Activated CD4-positive, alpha-beta memory T cell treated with anti-CD3 and anti-CD28 coated beads, Interleukin-2, amount 10 ng/mL, durations not matched to agents 7 days and 5 days (primary cell): ENCODE measurements at regions of chr9 and their contacts with region 1.

Region 1: GRCh38 chr9:20209391-20210340 is 412.6 kb downstream of the MLLT3 start:
- DNase-seq: peak; percentile 73
- H3K4me3 Mint-ChIP-seq: peak overlapping the region; percentile 4
- H3K27ac Mint-ChIP-seq: peak overlapping the region; percentile 92
- H3K4me1 Mint-ChIP-seq: peaks cover 45% of the 10 kb centered on the region
- H3K27me3 Mint-ChIP-seq: no peaks in the 10 kb centered on the region

Region 2: DNA sequence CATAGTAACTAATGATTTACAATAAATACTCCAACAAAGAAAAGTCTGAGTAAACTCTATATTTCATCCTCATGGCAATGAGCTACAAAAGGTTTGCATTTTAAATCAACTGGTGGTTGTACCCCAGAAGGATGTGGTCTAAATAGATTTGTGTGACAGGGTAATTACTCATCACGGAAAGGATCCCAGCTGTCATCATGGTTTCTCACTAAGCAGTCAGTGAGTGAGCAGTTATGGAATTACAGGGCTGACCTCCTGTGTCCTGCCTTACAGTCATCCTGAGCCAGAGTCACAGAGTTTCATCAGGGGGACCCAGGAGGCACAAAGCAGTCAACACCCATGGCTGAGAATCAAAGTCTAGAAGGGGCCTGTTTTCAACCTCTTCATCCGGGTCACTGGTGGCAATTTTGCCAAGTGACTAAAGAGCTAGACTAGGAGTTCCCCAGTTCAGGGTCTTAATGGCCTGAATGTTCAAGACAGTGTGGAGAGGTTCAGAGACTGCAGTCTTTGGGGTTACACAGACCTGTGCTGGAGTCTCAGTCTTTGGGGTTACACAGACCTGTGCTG is 210.1 kb before region 1 on chr9:
- CTCF ChIA-PET with region 1: no interaction called
- POLR2A ChIA-PET with region 1: interaction called, 10 read pairs
- DNase-seq: peak; percentile 74
- H3K4me3 Mint-ChIP-seq: no peak overlapping the region
- H3K27ac Mint-ChIP-seq: peak overlapping the region; percentile 93
- H3K4me1 Mint-ChIP-seq: peaks cover 53% of the 10 kb centered on the region
- H3K27me3 Mint-ChIP-seq: no peaks in the 10 kb centered on the region

Region 3: GRCh38 chr9:20095430-20096092 is 114.1 kb before region 1 on chr9:
- CTCF ChIA-PET with region 1: no interaction called
- POLR2A ChIA-PET with region 1: no interaction called
- DNase-seq: no peak
- H3K4me3 Mint-ChIP-seq: no peak overlapping the region
- H3K27ac Mint-ChIP-seq: no peak overlapping the region
- H3K4me1 Mint-ChIP-seq: no peaks in the 10 kb centered on the region
- H3K27me3 Mint-ChIP-seq: no peaks in the 10 kb centered on the region

Region 4: GRCh38 chr9:20152151-20152725 is 57.4 kb before region 1 on chr9:
- CTCF ChIA-PET with region 1: no interaction called
- POLR2A ChIA-PET with region 1: no interaction called
- DNase-seq: no peak
- H3K4me3 Mint-ChIP-seq: no peak overlapping the region
- H3K27ac Mint-ChIP-seq: no peak overlapping the region
- H3K4me1 Mint-ChIP-seq: no peaks in the 10 kb centered on the region
- H3K27me3 Mint-ChIP-seq: peaks cover 6% of the 10 kb centered on the region

Region 5: GRCh38 chr9:20242510-20243189 is 33.0 kb after region 1 on chr9:
- CTCF ChIA-PET with region 1: interaction called, 4 read pairs
- POLR2A ChIA-PET with region 1: interaction called, 24 read pairs
- DNase-seq: peak; percentile 57
- H3K4me3 Mint-ChIP-seq: peak overlapping the region; percentile 35
- H3K27ac Mint-ChIP-seq: peak overlapping the region; percentile 78
- H3K4me1 Mint-ChIP-seq: peaks cover 53% of the 10 kb centered on the region
- H3K27me3 Mint-ChIP-seq: no peaks in the 10 kb centered on the region

Region 6: DNA sequence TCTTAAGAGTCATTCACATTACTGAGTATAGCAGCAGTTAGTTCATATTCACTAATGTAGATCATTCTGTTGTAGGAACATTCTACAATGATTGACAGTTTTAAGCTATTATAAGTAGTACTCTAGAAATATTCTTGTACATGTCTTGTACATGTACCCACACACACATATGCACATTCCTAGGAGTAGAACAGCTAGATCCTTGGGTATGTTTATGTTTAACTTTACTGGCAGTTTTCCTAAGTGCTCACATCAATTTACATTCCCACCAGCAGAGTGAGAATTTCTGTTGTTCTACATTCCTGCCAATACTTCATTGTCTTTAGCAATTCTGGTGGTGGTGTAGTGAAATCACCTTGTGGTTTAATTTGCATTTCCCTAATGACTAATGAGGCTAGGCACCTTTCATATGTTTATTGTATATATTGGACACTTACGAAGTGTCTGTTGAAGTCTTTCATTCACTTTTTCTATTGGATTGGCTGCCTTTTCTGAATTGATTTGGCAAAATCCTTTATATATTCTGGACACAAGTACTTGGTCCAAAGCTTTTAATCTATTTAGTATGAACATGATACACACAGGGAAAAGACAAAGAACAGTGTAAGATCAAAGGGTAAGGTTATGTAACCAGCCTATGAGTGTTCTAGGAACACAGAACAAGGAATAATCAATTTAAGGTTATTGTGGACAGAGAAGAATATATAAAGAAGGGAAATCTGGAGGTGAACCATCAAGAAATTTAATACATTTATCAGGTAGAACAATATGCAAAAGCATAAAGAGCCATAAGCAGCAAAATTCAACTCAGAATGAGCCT is 317.0 kb after region 1 on chr9:
- CTCF ChIA-PET with region 1: no interaction called
- POLR2A ChIA-PET with region 1: no interaction called
- DNase-seq: no peak
- H3K4me3 Mint-ChIP-seq: no peak overlapping the region
- H3K27ac Mint-ChIP-seq: no peak overlapping the region
- H3K4me1 Mint-ChIP-seq: peaks cover 70% of the 10 kb centered on the region
- H3K27me3 Mint-ChIP-seq: no peaks in the 10 kb centered on the region